Activated CD4-positive, alpha-beta T cell treated with anti-CD3 and anti-CD28 coated beads for 36 hours (primary cell): ENCODE measurements at regions of chr6 and their contacts with region 1.

Region 1: DNA sequence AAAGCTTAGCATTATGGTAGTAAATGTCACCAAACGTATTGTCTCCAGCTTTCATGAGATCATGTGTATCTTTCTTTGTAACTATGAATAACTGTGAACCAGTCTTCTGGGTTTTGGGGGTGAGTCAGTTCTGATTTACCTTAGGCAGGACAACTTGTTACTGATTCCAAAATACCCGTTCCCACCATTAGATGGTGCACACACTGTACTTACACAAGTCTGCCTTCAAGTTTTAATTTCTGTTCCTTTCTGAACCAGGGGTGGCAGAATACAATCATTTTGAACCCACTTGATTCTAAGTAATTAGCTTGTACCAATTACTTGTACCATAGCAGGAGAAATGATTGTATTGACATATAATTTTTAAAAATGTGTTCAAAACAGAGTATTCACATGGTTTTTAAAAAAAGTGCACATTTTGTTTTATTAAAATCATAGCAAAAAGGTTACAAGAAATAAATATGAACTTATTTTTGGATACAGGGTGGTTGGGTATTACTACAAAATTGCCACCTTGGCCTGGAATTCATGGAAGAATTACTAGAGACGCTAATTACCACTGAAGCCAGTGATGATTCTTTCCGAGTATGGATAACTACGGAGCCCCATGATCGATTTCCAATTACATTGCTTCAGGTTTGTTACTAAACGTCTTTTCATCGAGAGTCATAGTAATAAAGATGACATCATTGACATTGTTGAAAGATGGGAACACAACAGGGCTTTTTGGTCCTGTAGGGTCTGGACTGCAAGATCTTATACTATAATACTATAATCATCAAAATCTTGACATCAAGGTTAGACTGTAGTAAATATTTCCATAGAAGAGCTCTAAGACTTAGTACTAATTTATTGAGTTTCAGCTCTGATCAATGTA is 75.2 kb upstream of the GLP1R start:
- DNase-seq: peak; percentile 51
- ATAC-seq: peak; percentile 99
- H3K4me3 Mint-ChIP-seq: no peak overlapping the region
- H3K27ac Mint-ChIP-seq: no peak overlapping the region
- H3K4me1 Mint-ChIP-seq: peaks cover 3% of the 10 kb centered on the region
- H3K27me3 Mint-ChIP-seq: peaks cover 19% of the 10 kb centered on the region

Region 2: GRCh38 chr6:38955861-38956260 is 17.6 kb before region 1 on chr6:
- CTCF ChIA-PET with region 1: interaction called, 12 read pairs
- POLR2A ChIA-PET with region 1: no interaction called
- intact Hi-C with region 1: no loop called
- DNase-seq: no peak
- ATAC-seq: no peak
- H3K4me3 Mint-ChIP-seq: no peak overlapping the region
- H3K27ac Mint-ChIP-seq: no peak overlapping the region
- H3K4me1 Mint-ChIP-seq: no peaks in the 10 kb centered on the region
- H3K27me3 Mint-ChIP-seq: peaks cover 8% of the 10 kb centered on the region

Region 3: DNA sequence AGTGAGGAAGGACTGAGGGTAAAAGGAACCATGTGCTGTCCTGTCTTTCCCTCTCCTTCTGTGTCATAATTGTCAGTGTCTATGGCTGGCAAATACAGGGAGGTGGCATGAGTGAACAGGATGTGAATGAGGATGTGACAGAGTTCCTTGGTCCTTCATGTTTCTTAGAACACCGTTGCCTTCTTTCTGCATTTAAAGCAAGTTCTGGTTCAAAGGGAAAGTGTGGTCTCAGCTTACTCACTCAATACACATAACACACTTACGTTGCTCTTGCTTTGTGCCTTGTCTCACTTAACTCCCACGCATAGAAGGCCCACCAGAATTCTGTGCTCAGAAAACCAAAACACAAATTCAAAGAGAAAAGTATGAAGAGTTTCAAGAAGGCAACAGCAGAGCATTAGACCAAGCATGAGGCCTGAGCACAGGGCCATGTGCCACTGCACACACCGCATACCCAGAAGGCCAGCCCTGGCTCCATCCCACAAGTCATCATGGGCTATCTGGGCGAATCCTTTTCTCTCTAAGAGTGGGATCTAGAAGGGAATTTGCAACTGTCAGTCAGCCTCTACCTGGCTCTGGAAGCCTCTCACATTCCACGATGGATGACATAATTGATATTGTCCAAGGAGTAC is 180.5 kb after region 1 on chr6:
- CTCF ChIA-PET with region 1: interaction called, 10 read pairs
- POLR2A ChIA-PET with region 1: no interaction called
- intact Hi-C with region 1: no loop called
- DNase-seq: peak; percentile 63
- ATAC-seq: peak; percentile 94
- H3K4me3 Mint-ChIP-seq: no peak overlapping the region
- H3K27ac Mint-ChIP-seq: peak overlapping the region; percentile 84
- H3K4me1 Mint-ChIP-seq: peaks cover 52% of the 10 kb centered on the region
- H3K27me3 Mint-ChIP-seq: peaks cover 10% of the 10 kb centered on the region

Region 4: DNA sequence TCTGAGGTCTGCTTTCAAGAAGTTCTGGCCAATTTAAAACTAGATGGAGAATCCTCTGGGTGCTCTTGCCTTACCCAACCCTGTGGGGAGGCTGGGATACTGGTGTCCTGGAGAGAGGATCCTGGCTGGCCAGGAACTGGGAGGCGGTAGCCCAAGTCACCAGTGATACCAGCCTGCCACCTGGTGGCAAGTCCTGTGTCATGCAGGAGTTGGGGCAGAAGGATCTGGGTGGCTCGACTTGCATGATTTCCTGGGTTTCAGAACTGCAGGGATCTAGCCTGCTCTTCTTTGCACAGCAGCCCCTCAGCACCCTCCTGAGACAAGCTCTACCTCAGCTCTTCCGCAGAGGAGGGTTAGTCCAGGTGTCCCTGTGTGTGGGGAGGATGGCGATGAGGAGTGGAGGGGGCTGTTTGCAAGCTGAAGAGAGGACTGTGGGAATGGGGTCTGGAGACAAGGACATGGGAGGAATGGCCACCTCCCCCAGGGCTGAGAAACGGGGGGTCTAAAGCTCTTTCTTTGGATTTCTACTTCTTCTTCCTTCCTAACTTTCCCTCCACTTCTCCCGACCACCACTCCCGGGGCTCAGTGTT is 336.6 kb after region 1 on chr6:
- CTCF ChIA-PET with region 1: interaction called, 14 read pairs
- POLR2A ChIA-PET with region 1: no interaction called
- intact Hi-C with region 1: loop called (anchors 1 to 2 kb)
- DNase-seq: peak; percentile 81
- ATAC-seq: peak; percentile 79
- H3K4me3 Mint-ChIP-seq: no peak overlapping the region
- H3K27ac Mint-ChIP-seq: no peak overlapping the region
- H3K4me1 Mint-ChIP-seq: peaks cover 4% of the 10 kb centered on the region
- H3K27me3 Mint-ChIP-seq: peaks cover 25% of the 10 kb centered on the region